ENCODE measurements at regions of chr20 and their contacts with region 1.

Region 1: DNA sequence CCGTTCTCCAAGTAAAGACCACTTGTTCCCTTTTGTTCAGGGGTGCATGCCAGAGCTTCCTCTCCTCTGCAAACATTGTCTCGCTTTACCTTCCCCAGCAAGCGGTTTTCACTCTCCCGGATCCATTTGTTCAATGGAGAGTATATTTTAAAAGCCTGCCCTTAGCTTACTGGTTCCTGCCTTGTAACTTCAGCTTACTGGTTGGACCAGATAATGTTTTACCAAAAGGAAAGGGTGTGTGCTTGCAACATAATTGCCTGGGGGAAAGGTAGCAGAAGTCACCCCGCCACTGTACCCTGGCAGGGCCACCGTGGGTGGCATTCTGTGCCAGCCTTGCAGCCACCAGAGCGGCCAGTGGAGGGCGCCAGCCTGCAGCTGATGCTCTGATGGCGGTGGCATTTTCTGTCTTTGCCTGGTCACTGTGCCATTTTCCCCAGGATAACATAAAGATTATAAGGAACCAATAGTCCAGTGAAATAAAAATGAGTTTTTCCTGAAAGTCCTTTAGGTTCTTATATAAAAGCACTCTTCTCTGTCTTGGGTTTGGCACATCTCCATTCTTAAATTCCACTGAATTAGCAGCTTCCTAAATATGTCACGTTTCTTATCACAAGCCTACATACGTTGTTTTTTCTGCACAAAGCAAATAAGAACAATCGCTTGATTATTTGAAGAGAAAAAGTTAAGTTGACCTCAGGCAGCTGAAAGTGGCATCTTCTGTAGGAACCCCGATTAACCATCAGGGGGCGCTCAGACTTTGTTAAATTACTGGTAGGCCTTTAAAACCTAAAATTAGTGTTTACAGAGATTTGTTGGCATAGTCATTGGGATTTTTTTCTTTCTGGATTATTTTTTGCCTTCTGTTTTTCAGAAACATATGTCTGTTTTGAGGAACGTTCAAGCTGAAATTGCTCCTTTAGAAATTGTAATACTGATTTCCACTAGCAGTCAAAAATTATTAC is 67.4 kb upstream of the XRN2 start:
- DNase-seq: peak; percentile 35 to 77 (median 54)
- ATAC-seq: peak; percentile 80
- H3K4me3 ChIP-seq: no peak overlapping the region
- H3K4me3 Mint-ChIP-seq: no peak overlapping the region
- H3K27ac ChIP-seq: no peak overlapping the region
- H3K27ac Mint-ChIP-seq: no peak overlapping the region
- H3K4me1 ChIP-seq: peaks cover 2% of the 10 kb centered on the region
- H3K4me1 Mint-ChIP-seq: no peaks in the 10 kb centered on the region
- H3K27me3 ChIP-seq: no peaks in the 10 kb centered on the region
- H3K27me3 Mint-ChIP-seq: no peaks in the 10 kb centered on the region
- CTCF ChIP-seq: peak; percentile 92

Region 2: GRCh38 chr20:20860078-20860806 is 375.5 kb before region 1 on chr20:
- CTCF ChIA-PET with region 1: interaction called, 3 read pairs
- POLR2A ChIA-PET with region 1: no interaction called
- intact Hi-C with region 1: loop called (anchors 1 to 5 kb)
- DNase-seq: peak; percentile 67 to 87 (median 79)
- ATAC-seq: peak; percentile 60
- H3K4me3 ChIP-seq: no peak overlapping the region
- H3K4me3 Mint-ChIP-seq: no peak overlapping the region
- H3K27ac ChIP-seq: no peak overlapping the region
- H3K27ac Mint-ChIP-seq: no peak overlapping the region
- H3K4me1 ChIP-seq: no peaks in the 10 kb centered on the region
- H3K4me1 Mint-ChIP-seq: no peaks in the 10 kb centered on the region
- H3K27me3 ChIP-seq: peaks cover 0 to 8% of the 10 kb centered on the region in 2 experiments
- H3K27me3 Mint-ChIP-seq: peaks cover 18% of the 10 kb centered on the region
- CTCF ChIP-seq: peak; percentile 91

Region 3: GRCh38 chr20:21339499-21339898 is 103.7 kb after region 1 on chr20:
- CTCF ChIA-PET with region 1: no interaction called
- POLR2A ChIA-PET with region 1: no interaction called
- intact Hi-C with region 1: loop called in 1 of 2 experiments (anchors 10 kb)
- DNase-seq: no peak
- ATAC-seq: no peak
- H3K4me3 ChIP-seq: no peak overlapping the region
- H3K4me3 Mint-ChIP-seq: no peak overlapping the region
- H3K27ac ChIP-seq: no peak overlapping the region
- H3K27ac Mint-ChIP-seq: no peak overlapping the region
- H3K4me1 ChIP-seq: no peaks in the 10 kb centered on the region
- H3K4me1 Mint-ChIP-seq: peaks cover 9% of the 10 kb centered on the region
- H3K27me3 ChIP-seq: no peaks in the 10 kb centered on the region
- H3K27me3 Mint-ChIP-seq: no peaks in the 10 kb centered on the region
- CTCF ChIP-seq: no peak

Region 4: GRCh38 chr20:21571841-21572690 is 336.3 kb after region 1 on chr20:
- CTCF ChIA-PET with region 1: interaction called, 3 read pairs
- POLR2A ChIA-PET with region 1: no interaction called
- intact Hi-C with region 1: loop called (anchors 5 kb)
- DNase-seq: peak in 7 of 14 experiments; percentile 3 to 59 (median 15)
- ATAC-seq: no peak
- H3K4me3 ChIP-seq: no peak overlapping the region
- H3K4me3 Mint-ChIP-seq: no peak overlapping the region
- H3K27ac ChIP-seq: no peak overlapping the region
- H3K27ac Mint-ChIP-seq: no peak overlapping the region
- H3K4me1 ChIP-seq: peaks cover 8% of the 10 kb centered on the region
- H3K4me1 Mint-ChIP-seq: no peaks in the 10 kb centered on the region
- H3K27me3 ChIP-seq: no peaks in the 10 kb centered on the region
- H3K27me3 Mint-ChIP-seq: peaks cover 34% of the 10 kb centered on the region
- CTCF ChIP-seq: peak; percentile 86

Region 5: DNA sequence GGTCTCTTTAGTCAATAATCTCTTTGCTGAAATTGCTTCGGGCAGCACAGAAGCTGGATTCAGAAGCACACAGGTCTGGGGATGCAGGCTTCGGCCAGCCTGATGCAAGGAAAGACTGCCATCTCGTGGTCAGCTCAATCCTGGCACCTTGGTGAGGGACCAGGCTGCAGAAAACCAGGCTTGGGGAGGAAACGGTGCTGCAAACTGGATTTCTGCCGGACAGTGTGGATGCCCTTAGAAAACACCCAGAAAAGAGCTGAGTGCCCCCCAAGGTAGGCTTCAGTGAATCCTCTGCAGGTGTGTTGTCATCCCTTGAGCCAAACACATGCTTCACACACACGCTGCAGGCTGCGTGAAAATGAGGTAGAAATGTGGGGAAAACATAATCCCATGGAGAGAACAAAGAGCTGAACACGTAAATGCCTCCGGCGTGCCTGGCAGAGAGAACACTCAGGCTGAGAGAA is 379.9 kb after region 1 on chr20:
- CTCF ChIA-PET with region 1: interaction called, 8 read pairs
- POLR2A ChIA-PET with region 1: no interaction called
- intact Hi-C with region 1: loop called in 1 of 2 experiments (anchors 5 kb)
- DNase-seq: peak; percentile 8 to 58 (median 28)
- ATAC-seq: no peak
- H3K4me3 ChIP-seq: no peak overlapping the region
- H3K4me3 Mint-ChIP-seq: no peak overlapping the region
- H3K27ac ChIP-seq: no peak overlapping the region
- H3K27ac Mint-ChIP-seq: no peak overlapping the region
- H3K4me1 ChIP-seq: no peaks in the 10 kb centered on the region
- H3K4me1 Mint-ChIP-seq: no peaks in the 10 kb centered on the region
- H3K27me3 ChIP-seq: peaks cover 0 to 5% of the 10 kb centered on the region in 2 experiments
- H3K27me3 Mint-ChIP-seq: peaks cover 62% of the 10 kb centered on the region
- CTCF ChIP-seq: peak; percentile 59